Esophagus muscularis mucosa (tissue), 4 donors: ENCODE measurements at regions of chr22 and their contacts with region 1.

Region 1: GRCh38 chr22:29883045-29883774 is at the start of gene MTMR3:
- DNase-seq: peak; percentile 97
- H3K4me3 ChIP-seq: peak within 1 kb of the TSS; percentile 98 to 100 (median 99)
- H3K27ac ChIP-seq: peak within 1 kb of the TSS; percentile 95 to 99 (median 98)
- H3K4me1 ChIP-seq: peaks cover 42 to 49% (median 45%) of the 10 kb centered on the region in 4 donors
- H3K27me3 ChIP-seq: no peaks in the 10 kb centered on the region
- CTCF ChIP-seq: peak; percentile 48 to 64 (median 53)
- EP300 ChIP-seq: no peak
- POLR2A ChIP-seq: no peak
- total RNA-seq, gene MTMR3: 33.5 to 46.5 (median 40.8) TPM

Region 2: DNA sequence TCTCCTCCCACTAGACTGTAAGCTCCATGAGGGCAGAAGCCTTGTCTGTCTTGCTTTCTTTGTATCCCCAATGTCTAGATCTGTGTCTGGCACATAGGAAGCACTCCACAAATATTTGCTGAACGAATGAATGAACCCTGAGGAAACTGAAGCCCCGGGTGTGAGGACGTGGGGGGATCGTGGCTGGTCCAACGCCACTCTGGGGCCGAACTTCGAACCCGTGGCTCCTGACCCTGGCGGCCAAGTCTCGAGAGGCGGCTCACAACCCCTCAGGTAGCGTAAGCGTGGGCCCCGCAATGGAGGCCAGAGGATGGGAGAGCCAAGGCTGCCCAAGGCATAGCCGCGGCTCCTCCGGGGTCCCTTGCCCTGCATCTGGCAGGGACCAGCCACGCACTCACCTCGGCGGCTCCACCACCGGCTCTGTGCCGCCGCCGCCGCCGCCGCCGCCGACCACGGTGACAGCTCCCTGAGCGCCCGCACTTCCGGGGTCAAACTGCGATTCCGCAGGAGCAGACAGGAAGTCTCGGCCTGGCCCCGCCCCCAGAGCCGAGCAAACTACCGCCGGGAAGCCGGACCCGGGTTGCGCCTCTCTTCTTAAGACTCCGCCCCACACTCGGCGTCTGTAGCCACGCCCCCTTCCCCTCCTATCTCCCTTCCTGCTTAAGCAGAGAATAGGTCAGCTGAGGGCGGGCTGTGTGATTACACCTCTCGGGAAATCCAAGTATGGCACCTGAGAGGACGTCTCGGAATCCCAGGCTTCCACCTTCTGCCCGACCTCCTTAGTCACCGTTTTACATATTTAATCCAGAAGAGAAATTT is 45.2 kb before region 1 on chr22 and contains the start of gene ASCC2:
- intact Hi-C with region 1: loop called (anchors 5 kb)
- DNase-seq: peak; percentile 100
- H3K4me3 ChIP-seq: peak within 1 kb of the TSS; percentile 74 to 99 (median 88)
- H3K27ac ChIP-seq: peak within 1 kb of the TSS; percentile 72 to 85 (median 78)
- H3K4me1 ChIP-seq: peaks cover 20 to 36% (median 21%) of the 10 kb centered on the region in 4 donors
- H3K27me3 ChIP-seq: no peaks in the 10 kb centered on the region
- CTCF ChIP-seq: peak in 1 of 3 experiments; percentile 28
- EP300 ChIP-seq: no peak
- POLR2A ChIP-seq: peak; percentile 73
- total RNA-seq, gene ASCC2: 20.5 to 32.6 (median 25.1) TPM

Region 3: GRCh38 chr22:29972121-29972520 is 88.9 kb after region 1 on chr22:
- intact Hi-C with region 1: loop called (anchors 5 kb)
- DNase-seq: no peak
- H3K4me3 ChIP-seq: no peak overlapping the region
- H3K27ac ChIP-seq: no peak overlapping the region
- H3K4me1 ChIP-seq: peaks cover 0 to 36% (median 31%) of the 10 kb centered on the region in 4 donors
- H3K27me3 ChIP-seq: no peaks in the 10 kb centered on the region
- CTCF ChIP-seq: no peak
- EP300 ChIP-seq: no peak
- POLR2A ChIP-seq: no peak

Region 4: DNA sequence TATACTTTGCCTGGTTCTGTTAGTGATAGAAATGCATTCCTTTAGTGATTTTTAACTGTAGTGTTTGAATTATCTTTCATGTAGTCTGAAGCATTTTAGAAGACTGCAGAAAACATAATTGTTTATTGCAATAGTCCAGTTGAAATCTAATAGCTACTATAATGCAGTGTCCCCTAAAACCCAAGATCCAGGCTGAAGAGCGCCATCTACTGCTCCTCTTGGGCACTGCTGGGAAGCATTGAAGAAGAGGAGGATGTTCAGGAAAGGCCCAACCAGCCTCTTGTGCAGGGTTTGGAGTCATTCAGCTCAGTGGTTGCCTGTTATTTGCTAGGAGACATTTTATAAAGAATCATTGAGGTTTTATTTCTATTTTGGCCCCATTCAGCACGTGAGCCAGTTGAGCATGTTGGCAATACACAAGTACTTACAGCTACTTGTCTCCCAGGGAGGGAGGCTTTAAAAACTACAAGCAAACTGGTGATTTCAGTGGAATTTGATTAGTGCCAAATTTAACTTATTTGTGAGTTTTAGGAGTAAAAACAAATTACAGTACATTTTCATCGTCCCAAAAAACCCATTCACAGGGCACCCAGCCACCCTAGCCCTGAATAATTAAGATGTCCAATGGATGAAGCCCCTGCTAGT is 122.1 kb after region 1 on chr22:
- intact Hi-C with region 1: loop called (anchors 5 kb)
- DNase-seq: no peak
- H3K4me3 ChIP-seq: no peak overlapping the region
- H3K27ac ChIP-seq: no peak overlapping the region
- H3K4me1 ChIP-seq: peaks cover 0 to 20% (median 9%) of the 10 kb centered on the region in 4 donors
- H3K27me3 ChIP-seq: no peaks in the 10 kb centered on the region
- CTCF ChIP-seq: peak; percentile 92 to 97 (median 96)
- EP300 ChIP-seq: no peak
- POLR2A ChIP-seq: no peak